ENCODE measurements at regions of chr2 and their contacts with region 1.

Region 1: DNA sequence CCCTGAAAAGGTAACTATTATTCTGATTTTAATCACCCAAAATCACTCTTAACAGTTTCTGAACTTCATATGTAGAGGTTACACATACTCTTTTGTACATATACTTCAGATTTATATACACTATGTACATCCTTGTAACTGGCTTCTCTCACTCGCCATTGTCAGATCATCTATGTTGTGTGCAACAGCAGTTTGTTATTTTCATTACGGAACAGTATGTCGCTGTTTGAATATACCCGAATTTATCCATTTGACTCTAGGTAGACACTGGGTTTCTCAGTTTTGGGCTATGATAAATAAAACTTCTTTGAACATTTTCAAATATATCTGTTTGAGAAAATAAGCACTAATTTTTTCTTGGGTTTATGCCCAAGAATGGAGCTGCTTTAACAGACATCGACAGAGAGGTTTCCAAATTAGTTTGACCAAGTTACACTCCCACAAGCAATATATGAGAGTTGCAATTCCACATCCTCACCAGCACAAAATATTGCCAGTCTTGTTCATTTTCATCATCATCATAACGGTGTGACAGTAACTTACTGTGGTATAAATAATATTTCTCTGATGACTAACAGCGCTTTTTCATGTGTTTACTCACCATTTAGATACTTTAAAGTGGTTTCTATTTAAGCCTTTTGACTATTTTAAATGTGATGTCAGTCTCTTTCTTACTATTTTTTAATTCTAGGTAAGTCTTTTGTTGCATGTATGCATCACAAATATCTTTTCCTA is 80.9 kb downstream of the SMC6 start:
- DNase-seq: no peak
- CTCF ChIP-seq: no peak

Region 2: GRCh38 chr2:17470855-17471641 is 201.7 kb before region 1 on chr2:
- CTCF ChIA-PET with region 1: interaction called, 26 read pairs
- POLR2A ChIA-PET with region 1: no interaction called
- DNase-seq: peak; percentile 5
- CTCF ChIP-seq: peak; percentile 19

Region 3: GRCh38 chr2:17658251-17658843 is 14.4 kb before region 1 on chr2:
- CTCF ChIA-PET with region 1: interaction called, 193 read pairs
- POLR2A ChIA-PET with region 1: no interaction called
- DNase-seq: no peak
- CTCF ChIP-seq: no peak

Region 4: GRCh38 chr2:17753803-17754663 is 81.3 kb after region 1 on chr2 and contains the starts of genes GEN1 and SMC6:
- CTCF ChIA-PET with region 1: no interaction called
- POLR2A ChIA-PET with region 1: no interaction called
- DNase-seq: peak; percentile 95
- CTCF ChIP-seq: no peak

Measured in GM10248 (cell line).